Activated T-helper 2 cell treated with anti-CD3 and anti-CD28 coated beads, Interferon-gamma antibody, Interleukin-2, Interleukin-4, amounts not matched to agents 10 μg/mL and 5 μg/mL and 100 μg/mL, durations not matched to agents 14 hours and 24 hours and 36 hours (primary cell): ENCODE measurements at regions of chr2 and their contacts with region 1.

Region 1: DNA sequence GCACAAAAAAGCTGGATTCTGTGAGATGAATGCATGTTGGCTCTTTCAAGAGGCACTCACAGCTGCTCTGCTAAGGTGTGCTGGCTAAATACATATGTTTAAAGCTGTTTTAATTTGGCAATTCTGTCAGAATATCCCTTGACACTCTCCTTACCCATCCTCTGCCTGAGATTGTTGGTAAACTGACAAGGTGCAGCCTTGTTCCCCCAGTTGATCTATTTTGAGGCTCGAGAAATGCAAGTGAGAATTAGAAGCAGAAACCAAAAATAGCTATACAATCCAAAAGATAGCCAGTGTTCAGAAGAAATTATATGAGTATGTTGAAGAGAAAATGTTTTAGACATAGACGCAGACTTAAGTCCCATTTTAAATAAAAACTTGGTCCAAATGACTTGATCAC is 971.7 kb upstream of the GYPC start:
- DNase-seq: no peak
- H3K4me3 Mint-ChIP-seq: no peak overlapping the region
- H3K27ac Mint-ChIP-seq: no peak overlapping the region
- H3K4me1 Mint-ChIP-seq: no peaks in the 10 kb centered on the region
- H3K27me3 Mint-ChIP-seq: no peaks in the 10 kb centered on the region

Region 2: GRCh38 chr2:125696561-125696960 is 12.3 kb after region 1 on chr2:
- intact Hi-C with region 1: loop called (anchors 1 kb)
- DNase-seq: no peak
- H3K4me3 Mint-ChIP-seq: no peak overlapping the region
- H3K27ac Mint-ChIP-seq: no peak overlapping the region
- H3K4me1 Mint-ChIP-seq: no peaks in the 10 kb centered on the region
- H3K27me3 Mint-ChIP-seq: no peaks in the 10 kb centered on the region

Region 3: DNA sequence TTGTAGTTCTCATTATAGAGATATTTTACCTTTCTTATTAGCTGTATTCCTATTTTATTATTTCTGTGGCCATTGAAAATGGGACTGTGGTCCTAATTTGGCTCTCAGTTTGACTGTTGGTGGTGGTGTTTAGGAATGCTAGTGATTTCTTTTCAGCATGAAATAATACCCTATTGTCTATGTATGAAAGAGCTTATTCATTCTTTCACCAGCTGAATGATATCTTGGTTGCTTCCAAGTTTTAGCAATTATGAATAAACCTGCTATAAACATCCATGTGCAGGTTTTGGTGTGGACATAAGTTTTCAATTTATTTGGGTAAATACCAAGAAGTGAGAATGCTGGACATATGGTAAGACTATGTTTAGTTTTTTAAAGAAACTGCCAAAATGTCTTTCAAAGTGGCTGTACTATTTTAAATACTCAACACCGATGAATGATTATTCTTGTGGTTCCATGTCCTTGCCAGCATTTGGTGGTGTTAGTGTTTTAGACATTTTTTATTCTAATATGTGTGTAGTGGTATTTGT is 470.1 kb after region 1 on chr2:
- intact Hi-C with region 1: no loop called
- DNase-seq: no peak
- H3K4me3 Mint-ChIP-seq: no peak overlapping the region
- H3K27ac Mint-ChIP-seq: no peak overlapping the region
- H3K4me1 Mint-ChIP-seq: no peaks in the 10 kb centered on the region
- H3K27me3 Mint-ChIP-seq: no peaks in the 10 kb centered on the region